Naive thymus-derived CD4-positive, alpha-beta T cell (primary cell): ENCODE measurements at regions of chr19 and their contacts with region 1.

Region 1: GRCh38 chr19:10580979-10581631 is 6.0 kb downstream of the AP1M2 start:
- DNase-seq: peak; percentile 76 to 88 (median 85)
- ATAC-seq: peak; percentile 100
- H3K4me3 ChIP-seq: no peak overlapping the region
- H3K4me3 Mint-ChIP-seq: peak overlapping the region in 4 of 10 donors; percentile 3 to 33 (median 24)
- H3K27ac ChIP-seq: no peak overlapping the region
- H3K27ac Mint-ChIP-seq: peak overlapping the region in 2 of 9 donors; percentile 2 to 72
- H3K4me1 ChIP-seq: peaks cover 4 to 5% of the 10 kb centered on the region in 2 donors
- H3K4me1 Mint-ChIP-seq: peaks cover 6 to 20% (median 7%) of the 10 kb centered on the region in 7 donors
- H3K27me3 ChIP-seq: no peaks in the 10 kb centered on the region
- H3K27me3 Mint-ChIP-seq: peaks cover 0 to 7% (median 0%) of the 10 kb centered on the region in 5 donors

Region 2: GRCh38 chr19:10428996-10429381 is 152.1 kb before region 1 on chr19:
- CTCF ChIA-PET with region 1: no interaction called
- POLR2A ChIA-PET with region 1: no interaction called
- intact Hi-C with region 1: no loop called
- DNase-seq: no peak
- ATAC-seq: no peak
- H3K4me3 ChIP-seq: no peak overlapping the region
- H3K4me3 Mint-ChIP-seq: peak overlapping the region in 1 of 10 donors; percentile 73
- H3K27ac ChIP-seq: no peak overlapping the region
- H3K27ac Mint-ChIP-seq: peak overlapping the region in 4 of 9 donors; percentile 32 to 94 (median 52)
- H3K4me1 ChIP-seq: peaks cover 30 to 54% of the 10 kb centered on the region in 2 donors
- H3K4me1 Mint-ChIP-seq: peaks cover 32 to 74% (median 49%) of the 10 kb centered on the region in 7 donors
- H3K27me3 ChIP-seq: peaks cover 0 to 16% of the 10 kb centered on the region in 2 donors
- H3K27me3 Mint-ChIP-seq: peaks cover 22 to 49% (median 38%) of the 10 kb centered on the region in 5 donors

Region 3: GRCh38 chr19:10593820-10594637 is 12.9 kb after region 1 on chr19:
- CTCF ChIA-PET with region 1: interaction called, 11 read pairs
- POLR2A ChIA-PET with region 1: interaction called, 5 read pairs
- intact Hi-C with region 1: no loop called
- DNase-seq: no peak
- ATAC-seq: no peak
- H3K4me3 ChIP-seq: no peak overlapping the region
- H3K4me3 Mint-ChIP-seq: peak overlapping the region in 1 of 10 donors; percentile 41
- H3K27ac ChIP-seq: no peak overlapping the region
- H3K27ac Mint-ChIP-seq: peak overlapping the region in 1 of 9 donors; percentile 78
- H3K4me1 ChIP-seq: peaks cover 12 to 13% of the 10 kb centered on the region in 2 donors
- H3K4me1 Mint-ChIP-seq: peaks cover 6 to 22% (median 16%) of the 10 kb centered on the region in 7 donors
- H3K27me3 ChIP-seq: no peaks in the 10 kb centered on the region
- H3K27me3 Mint-ChIP-seq: peaks cover 0 to 4% (median 0%) of the 10 kb centered on the region in 5 donors

Region 4: GRCh38 chr19:10612491-10613119 is 31.5 kb after region 1 on chr19:
- CTCF ChIA-PET with region 1: interaction called, 14 read pairs
- POLR2A ChIA-PET with region 1: no interaction called
- intact Hi-C with region 1: loop called in 1 of 2 experiments (anchors 2 kb)
- DNase-seq: no peak
- ATAC-seq: no peak
- H3K4me3 ChIP-seq: no peak overlapping the region
- H3K4me3 Mint-ChIP-seq: peak overlapping the region in 3 of 10 donors; percentile 21 to 56 (median 25)
- H3K27ac ChIP-seq: no peak overlapping the region
- H3K27ac Mint-ChIP-seq: peak overlapping the region in 6 of 9 donors; percentile 13 to 64 (median 48)
- H3K4me1 ChIP-seq: peaks cover 9 to 10% of the 10 kb centered on the region in 2 donors
- H3K4me1 Mint-ChIP-seq: peaks cover 9 to 56% (median 34%) of the 10 kb centered on the region in 7 donors
- H3K27me3 ChIP-seq: no peaks in the 10 kb centered on the region
- H3K27me3 Mint-ChIP-seq: no peaks in the 10 kb centered on the region

Region 5: DNA sequence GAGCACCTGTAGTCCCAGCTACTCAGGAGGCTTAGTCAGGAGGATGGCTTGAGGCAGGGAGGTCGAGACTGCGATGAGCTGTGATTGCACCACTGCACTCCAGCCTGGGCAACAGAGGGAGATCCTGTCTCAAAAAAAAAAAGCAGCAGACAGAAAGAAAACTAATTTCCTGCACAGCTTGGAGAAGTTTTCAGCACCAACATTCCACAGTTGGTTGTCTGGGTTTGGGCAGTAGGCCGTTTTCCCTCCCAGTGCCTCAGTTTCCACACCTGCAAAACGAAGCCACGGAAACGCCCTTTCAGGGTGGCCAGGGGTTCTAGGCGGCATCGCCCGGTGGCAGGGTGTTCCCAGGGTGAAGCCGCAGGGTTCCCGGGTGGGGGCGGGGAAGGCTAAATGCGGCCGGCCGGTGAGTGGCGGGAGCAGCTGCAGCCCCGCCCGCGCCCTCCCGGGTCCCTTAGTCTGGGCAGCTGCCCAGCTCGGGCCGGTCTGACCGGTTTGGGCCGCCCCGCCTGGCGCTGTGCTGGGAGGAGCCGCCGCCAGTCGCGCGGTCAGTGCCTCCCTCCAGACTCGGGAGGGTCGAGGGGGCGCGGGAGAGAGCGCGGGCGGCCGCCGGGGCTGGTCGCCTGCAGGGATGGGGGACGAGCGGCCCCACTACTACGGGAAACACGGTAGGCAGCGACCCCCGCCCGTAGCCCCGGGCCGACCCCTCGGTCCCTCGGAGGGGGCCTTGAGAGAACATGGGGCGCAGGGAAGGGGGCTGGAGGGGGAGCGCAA is 44.1 kb after region 1 on chr19 and contains the start of gene SLC44A2:
- CTCF ChIA-PET with region 1: interaction called, 10 read pairs
- POLR2A ChIA-PET with region 1: interaction called, 5 read pairs
- intact Hi-C with region 1: no loop called
- DNase-seq: no peak
- ATAC-seq: no peak
- H3K4me3 ChIP-seq: no peak within 1 kb of the TSS
- H3K4me3 Mint-ChIP-seq: peak within 1 kb of the TSS; percentile 27 to 66 (median 56)
- H3K27ac ChIP-seq: peak within 1 kb of the TSS; percentile 51
- H3K27ac Mint-ChIP-seq: peak within 1 kb of the TSS; percentile 71 to 90 (median 87)
- H3K4me1 ChIP-seq: peaks cover 10 to 14% of the 10 kb centered on the region in 2 donors
- H3K4me1 Mint-ChIP-seq: peaks cover 35 to 51% (median 40%) of the 10 kb centered on the region in 7 donors
- H3K27me3 ChIP-seq: no peaks in the 10 kb centered on the region
- H3K27me3 Mint-ChIP-seq: no peaks in the 10 kb centered on the region
- total RNA-seq, gene SLC44A2: 148 to 272 (median 194) TPM

Region 6: DNA sequence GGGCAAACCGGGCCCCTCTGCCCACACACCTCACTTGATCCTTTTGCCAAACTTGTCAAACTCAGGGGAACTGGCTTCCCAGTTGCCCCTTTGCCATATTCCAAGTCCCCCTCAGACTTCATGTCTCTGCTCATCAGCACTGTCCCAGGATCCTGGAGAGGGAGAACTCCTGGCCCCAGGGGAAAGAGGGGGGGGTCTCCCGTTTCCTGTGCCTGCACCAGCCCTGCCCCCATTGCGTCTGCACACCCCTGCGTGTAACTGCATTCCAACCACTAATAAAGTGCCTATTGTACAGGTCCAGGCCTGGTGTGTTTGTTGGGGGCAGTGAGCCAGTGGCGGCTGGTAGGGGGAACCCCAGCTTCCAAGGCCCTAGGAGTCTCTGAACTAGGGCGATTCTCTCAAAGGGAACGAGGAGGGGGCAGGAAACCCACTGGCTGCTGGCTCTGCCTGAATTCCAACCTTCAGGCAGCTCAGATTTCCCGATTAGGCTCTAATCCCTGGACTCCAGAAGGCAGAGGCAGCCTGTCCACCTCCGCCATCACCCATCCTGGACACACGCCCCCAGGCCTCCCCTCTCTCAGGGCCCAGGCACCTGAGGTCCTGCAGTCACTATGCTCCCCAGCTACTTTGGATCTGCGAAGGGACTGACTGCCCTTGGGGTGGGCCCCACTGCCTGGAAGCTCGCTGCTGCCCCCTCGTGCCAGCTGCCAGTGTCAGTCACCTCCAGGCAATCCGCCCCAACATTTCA is 63.3 kb after region 1 on chr19:
- CTCF ChIA-PET with region 1: interaction called, 287 read pairs
- POLR2A ChIA-PET with region 1: interaction called, 42 read pairs
- intact Hi-C with region 1: loop called (anchors 1 kb)
- DNase-seq: peak; percentile 73 to 89 (median 81)
- ATAC-seq: peak; percentile 95
- H3K4me3 ChIP-seq: no peak overlapping the region
- H3K4me3 Mint-ChIP-seq: no peak overlapping the region
- H3K27ac ChIP-seq: peak overlapping the region; percentile 35
- H3K27ac Mint-ChIP-seq: peak overlapping the region; percentile 38 to 89 (median 84)
- H3K4me1 ChIP-seq: peaks cover 0 to 8% of the 10 kb centered on the region in 2 donors
- H3K4me1 Mint-ChIP-seq: peaks cover 10 to 36% (median 24%) of the 10 kb centered on the region in 7 donors
- H3K27me3 ChIP-seq: no peaks in the 10 kb centered on the region
- H3K27me3 Mint-ChIP-seq: peaks cover 0 to 2% (median 0%) of the 10 kb centered on the region in 5 donors

Region 7: DNA sequence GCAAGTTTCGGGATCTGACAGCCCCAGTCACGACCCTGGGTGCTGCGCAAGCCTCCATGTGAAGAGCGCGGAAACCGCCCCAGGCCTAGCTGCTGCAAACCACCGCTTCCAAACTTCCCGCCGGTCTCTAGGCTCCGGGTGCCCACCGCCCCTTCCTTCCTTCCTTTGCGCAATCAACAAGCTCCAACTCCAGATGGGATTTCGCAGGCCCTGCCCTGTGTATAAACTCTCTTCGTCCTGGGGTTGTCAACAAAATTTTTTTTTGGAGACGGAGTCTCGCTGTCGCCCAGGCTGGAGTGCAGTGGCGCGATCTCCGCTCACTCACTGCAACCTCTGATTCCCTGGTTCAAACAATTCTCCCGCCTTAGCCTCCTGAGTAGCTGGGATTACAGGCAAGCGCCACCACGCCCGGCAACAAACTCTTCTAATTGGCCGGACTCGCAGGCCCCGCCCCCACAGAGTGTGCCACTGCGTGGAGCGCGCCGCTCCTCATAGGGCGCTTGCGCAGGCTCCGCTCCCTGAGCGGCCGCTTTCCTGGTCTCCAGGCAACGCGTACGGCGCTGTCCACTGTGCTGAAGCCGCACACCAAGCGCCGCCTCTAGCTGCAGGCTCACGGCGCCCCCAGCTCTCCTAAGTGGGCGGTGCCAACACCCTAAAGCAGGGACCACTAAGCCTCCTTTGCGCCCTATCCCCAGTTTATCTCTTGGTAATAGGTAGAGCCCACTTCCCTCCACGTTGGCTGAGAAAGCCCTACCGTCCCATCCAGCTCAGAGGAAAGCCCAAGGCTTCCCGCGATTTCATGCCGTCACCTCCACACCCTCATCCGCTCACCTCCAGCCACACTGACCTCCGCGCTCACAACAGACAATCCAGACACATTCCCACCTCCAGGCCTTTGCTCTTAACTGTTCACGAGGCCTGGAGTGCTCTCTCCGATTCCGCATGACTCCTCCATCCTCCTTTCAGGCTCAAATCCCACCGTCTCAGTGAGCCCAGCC is 114.6 kb after region 1 on chr19:
- CTCF ChIA-PET with region 1: interaction called, 35 read pairs
- POLR2A ChIA-PET with region 1: interaction called, 5 read pairs
- intact Hi-C with region 1: loop called (anchors 1 kb)
- DNase-seq: peak; percentile 79 to 90 (median 85)
- ATAC-seq: peak; percentile 99
- H3K4me3 ChIP-seq: peak overlapping the region; percentile 36
- H3K4me3 Mint-ChIP-seq: peak overlapping the region; percentile 81 to 89 (median 86)
- H3K27ac ChIP-seq: no peak overlapping the region
- H3K27ac Mint-ChIP-seq: peak overlapping the region in 8 of 9 donors; percentile 9 to 88 (median 56)
- H3K4me1 ChIP-seq: peaks cover 4 to 10% of the 10 kb centered on the region in 2 donors
- H3K4me1 Mint-ChIP-seq: peaks cover 12 to 25% (median 21%) of the 10 kb centered on the region in 7 donors
- H3K27me3 ChIP-seq: no peaks in the 10 kb centered on the region
- H3K27me3 Mint-ChIP-seq: peaks cover 0 to 11% (median 0%) of the 10 kb centered on the region in 5 donors

Region 8: GRCh38 chr19:10769533-10770491 is 188.7 kb after region 1 on chr19:
- CTCF ChIA-PET with region 1: no interaction called
- POLR2A ChIA-PET with region 1: no interaction called
- intact Hi-C with region 1: loop called in 1 of 2 experiments (anchors 2 kb)
- DNase-seq: peak in 6 of 9 donors; percentile 21 to 49 (median 38)
- ATAC-seq: no peak
- H3K4me3 ChIP-seq: no peak overlapping the region
- H3K4me3 Mint-ChIP-seq: no peak overlapping the region
- H3K27ac ChIP-seq: peak overlapping the region; percentile 29
- H3K27ac Mint-ChIP-seq: peak overlapping the region in 8 of 9 donors; percentile 20 to 79 (median 68)
- H3K4me1 ChIP-seq: peaks cover 0 to 4% of the 10 kb centered on the region in 2 donors
- H3K4me1 Mint-ChIP-seq: peaks cover 14 to 42% (median 32%) of the 10 kb centered on the region in 7 donors
- H3K27me3 ChIP-seq: no peaks in the 10 kb centered on the region
- H3K27me3 Mint-ChIP-seq: no peaks in the 10 kb centered on the region

Region 9: GRCh38 chr19:10780368-10780767 is 199.3 kb after region 1 on chr19:
- CTCF ChIA-PET with region 1: no interaction called
- POLR2A ChIA-PET with region 1: no interaction called
- intact Hi-C with region 1: no loop called
- DNase-seq: no peak
- ATAC-seq: peak; percentile 85
- H3K4me3 ChIP-seq: no peak overlapping the region
- H3K4me3 Mint-ChIP-seq: peak overlapping the region in 1 of 10 donors; percentile 69
- H3K27ac ChIP-seq: no peak overlapping the region
- H3K27ac Mint-ChIP-seq: peak overlapping the region in 3 of 9 donors; percentile 27 to 62 (median 30)
- H3K4me1 ChIP-seq: no peaks in the 10 kb centered on the region
- H3K4me1 Mint-ChIP-seq: peaks cover 0 to 28% (median 6%) of the 10 kb centered on the region in 7 donors
- H3K27me3 ChIP-seq: no peaks in the 10 kb centered on the region
- H3K27me3 Mint-ChIP-seq: no peaks in the 10 kb centered on the region